ENCODE measurements at regions of chr12 and their contacts with region 1.

Region 1: GRCh38 chr12:68815928-68816800 is 8.2 kb downstream of the MDM2 start:
- DNase-seq: no peak
- ATAC-seq: no peak
- H3K4me3 ChIP-seq: no peak overlapping the region
- H3K27ac ChIP-seq: no peak overlapping the region
- H3K4me1 ChIP-seq: peaks cover 34% of the 10 kb centered on the region; the same call in 2 of the 3 replicates
- CTCF ChIP-seq: no peak
- EP300 ChIP-seq: no peak
- POLR2A ChIP-seq: no peak
- RAD21 ChIP-seq: no peak

Region 2: GRCh38 chr12:68831272-68831671 is 15.1 kb after region 1 on chr12:
- CTCF ChIA-PET with region 1: interaction called, 28 read pairs
- POLR2A ChIA-PET with region 1: interaction called, 5 read pairs
- DNase-seq: no peak
- ATAC-seq: peak in 1 of 2 experiments; percentile 31; a peak in 3 of 6 replicates
- H3K4me3 ChIP-seq: no peak overlapping the region
- H3K27ac ChIP-seq: no peak overlapping the region
- H3K4me1 ChIP-seq: peaks cover 26% of the 10 kb centered on the region; the same call in 2 of the 3 replicates
- CTCF ChIP-seq: no peak
- EP300 ChIP-seq: no peak
- POLR2A ChIP-seq: no peak
- RAD21 ChIP-seq: no peak

Region 3: GRCh38 chr12:68844788-68845695 is 28.9 kb after region 1 on chr12:
- CTCF ChIA-PET with region 1: no interaction called
- POLR2A ChIA-PET with region 1: no interaction called
- DNase-seq: no peak
- ATAC-seq: peak in 1 of 2 experiments; percentile 15; a peak in 1 of 6 replicates
- H3K4me3 ChIP-seq: no peak overlapping the region
- H3K27ac ChIP-seq: no peak overlapping the region
- H3K4me1 ChIP-seq: no peaks in the 10 kb centered on the region; the same call in 2 of the 3 replicates
- CTCF ChIP-seq: no peak
- EP300 ChIP-seq: no peak
- POLR2A ChIP-seq: no peak
- RAD21 ChIP-seq: no peak